T-cell (primary cell): ENCODE measurements at regions of chr7 and their contacts with region 1.

Region 1: DNA sequence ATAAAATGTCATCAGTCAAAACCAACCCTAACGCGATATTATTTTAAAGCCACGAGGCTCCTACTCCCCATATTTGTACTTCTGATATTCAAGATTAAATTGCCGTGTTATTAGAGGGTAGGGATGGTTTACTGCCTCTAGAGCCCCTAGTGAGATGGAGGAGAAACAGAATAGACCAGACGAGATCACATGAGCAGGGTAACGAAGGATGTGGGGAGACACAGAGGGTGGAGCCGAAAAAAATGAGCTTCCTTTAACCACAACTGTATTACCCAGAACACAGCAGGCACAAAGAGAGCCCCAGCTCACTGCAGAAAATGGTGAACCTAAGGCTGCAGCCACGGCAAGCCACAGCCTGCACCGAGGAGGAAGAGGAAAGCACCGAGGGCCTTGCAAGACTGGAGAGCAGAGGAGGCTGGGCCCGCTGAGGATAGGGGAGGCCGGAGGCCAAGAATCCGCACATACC is 14.3 kb downstream of the ZC3HAV1 start:
- DNase-seq: peak; percentile 59 to 94 (median 80)
- ATAC-seq: peak; percentile 90 to 91 (median 90)
- H3K4me3 ChIP-seq: peak overlapping the region; percentile 52
- H3K4me3 Mint-ChIP-seq: peak overlapping the region; percentile 77 to 87 (median 80)
- H3K27ac ChIP-seq: peak overlapping the region; percentile 81
- H3K27ac Mint-ChIP-seq: peak overlapping the region; percentile 92 to 95
- H3K4me1 ChIP-seq: peaks cover 70 to 83% of the 10 kb centered on the region in 2 experiments
- H3K4me1 Mint-ChIP-seq: peaks cover 85 to 96% (median 93%) of the 10 kb centered on the region in 3 donors
- H3K27me3 ChIP-seq: no peaks in the 10 kb centered on the region
- H3K27me3 Mint-ChIP-seq: no peaks in the 10 kb centered on the region

Region 2: DNA sequence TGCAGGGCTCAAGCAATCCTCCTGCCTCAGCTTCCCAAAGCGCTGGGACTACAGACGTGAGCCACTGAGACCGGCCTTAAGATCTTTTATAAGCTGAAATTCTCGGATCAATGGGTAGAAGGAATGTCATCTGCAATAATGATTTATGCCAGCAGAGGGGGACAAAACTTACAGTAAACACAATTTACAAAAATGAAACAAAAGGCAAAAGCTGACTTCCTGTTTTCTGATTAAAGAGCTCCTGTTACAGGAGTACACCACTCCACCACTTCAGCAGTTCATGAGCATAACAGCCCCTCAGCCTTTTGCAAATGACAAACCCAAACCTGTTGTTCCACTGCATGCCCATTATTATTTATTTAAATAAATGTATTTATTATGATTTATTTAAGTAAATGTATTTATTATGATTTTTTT is 208.7 kb before region 1 on chr7:
- CTCF ChIA-PET with region 1: interaction called, 3 to 10 read pairs
- POLR2A ChIA-PET with region 1: no interaction called
- DNase-seq: peak in 23 of 35 experiments; percentile 1 to 86 (median 29)
- ATAC-seq: peak; percentile 86 to 92 (median 88)
- H3K4me3 ChIP-seq: no peak overlapping the region
- H3K4me3 Mint-ChIP-seq: peak overlapping the region in 1 of 3 donors; percentile 22
- H3K27ac ChIP-seq: no peak overlapping the region
- H3K27ac Mint-ChIP-seq: peak overlapping the region; percentile 69 to 83
- H3K4me1 ChIP-seq: peaks cover 3 to 9% of the 10 kb centered on the region in 2 experiments
- H3K4me1 Mint-ChIP-seq: peaks cover 17 to 21% (median 19%) of the 10 kb centered on the region in 3 donors
- H3K27me3 ChIP-seq: peaks cover 0 to 4% of the 10 kb centered on the region in 2 experiments
- H3K27me3 Mint-ChIP-seq: peaks cover 0 to 3% of the 10 kb centered on the region in 2 donors

Region 3: GRCh38 chr7:139051655-139052054 is 43.6 kb before region 1 on chr7:
- CTCF ChIA-PET with region 1: no interaction called
- POLR2A ChIA-PET with region 1: interaction called in 1 of 2 experiments, 12 read pairs
- DNase-seq: no peak
- ATAC-seq: no peak
- H3K4me3 ChIP-seq: no peak overlapping the region
- H3K4me3 Mint-ChIP-seq: no peak overlapping the region
- H3K27ac ChIP-seq: peak overlapping the region; percentile 6
- H3K27ac Mint-ChIP-seq: peak overlapping the region in 1 of 2 donors; percentile 75
- H3K4me1 ChIP-seq: peaks cover 0 to 2% of the 10 kb centered on the region in 2 experiments
- H3K4me1 Mint-ChIP-seq: peaks cover 28 to 44% (median 41%) of the 10 kb centered on the region in 3 donors
- H3K27me3 ChIP-seq: no peaks in the 10 kb centered on the region
- H3K27me3 Mint-ChIP-seq: no peaks in the 10 kb centered on the region

Region 4: GRCh38 chr7:139080905-139081304 is 14.3 kb before region 1 on chr7:
- CTCF ChIA-PET with region 1: interaction called, 8 to 43 read pairs
- POLR2A ChIA-PET with region 1: interaction called, 5 to 25 read pairs
- DNase-seq: no peak
- ATAC-seq: peak in 2 of 4 experiments; percentile 13 to 31
- H3K4me3 ChIP-seq: no peak overlapping the region
- H3K4me3 Mint-ChIP-seq: peak overlapping the region; percentile 53 to 64 (median 55)
- H3K27ac ChIP-seq: peak overlapping the region; percentile 43
- H3K27ac Mint-ChIP-seq: peak overlapping the region; percentile 91 to 92
- H3K4me1 ChIP-seq: peaks cover 64 to 65% of the 10 kb centered on the region in 2 experiments
- H3K4me1 Mint-ChIP-seq: peaks cover 90 to 96% (median 93%) of the 10 kb centered on the region in 3 donors
- H3K27me3 ChIP-seq: no peaks in the 10 kb centered on the region
- H3K27me3 Mint-ChIP-seq: no peaks in the 10 kb centered on the region

Region 5: GRCh38 chr7:139133335-139134139 is 38.3 kb after region 1 on chr7:
- CTCF ChIA-PET with region 1: interaction called in 1 of 2 experiments, 14 read pairs
- POLR2A ChIA-PET with region 1: interaction called in 1 of 2 experiments, 9 read pairs
- DNase-seq: peak; percentile 81 to 92 (median 86)
- ATAC-seq: peak; percentile 98 to 99 (median 99)
- H3K4me3 ChIP-seq: peak overlapping the region; percentile 57 to 83
- H3K4me3 Mint-ChIP-seq: peak overlapping the region; percentile 85 to 95 (median 90)
- H3K27ac ChIP-seq: peak overlapping the region; percentile 67
- H3K27ac Mint-ChIP-seq: peak overlapping the region; percentile 83 to 86
- H3K4me1 ChIP-seq: peaks cover 8 to 16% of the 10 kb centered on the region in 2 experiments
- H3K4me1 Mint-ChIP-seq: peaks cover 15 to 18% (median 18%) of the 10 kb centered on the region in 3 donors
- H3K27me3 ChIP-seq: no peaks in the 10 kb centered on the region
- H3K27me3 Mint-ChIP-seq: no peaks in the 10 kb centered on the region